SK-N-SH (cell line): ENCODE measurements at regions of chr5 and their contacts with region 1.

Region 1: DNA sequence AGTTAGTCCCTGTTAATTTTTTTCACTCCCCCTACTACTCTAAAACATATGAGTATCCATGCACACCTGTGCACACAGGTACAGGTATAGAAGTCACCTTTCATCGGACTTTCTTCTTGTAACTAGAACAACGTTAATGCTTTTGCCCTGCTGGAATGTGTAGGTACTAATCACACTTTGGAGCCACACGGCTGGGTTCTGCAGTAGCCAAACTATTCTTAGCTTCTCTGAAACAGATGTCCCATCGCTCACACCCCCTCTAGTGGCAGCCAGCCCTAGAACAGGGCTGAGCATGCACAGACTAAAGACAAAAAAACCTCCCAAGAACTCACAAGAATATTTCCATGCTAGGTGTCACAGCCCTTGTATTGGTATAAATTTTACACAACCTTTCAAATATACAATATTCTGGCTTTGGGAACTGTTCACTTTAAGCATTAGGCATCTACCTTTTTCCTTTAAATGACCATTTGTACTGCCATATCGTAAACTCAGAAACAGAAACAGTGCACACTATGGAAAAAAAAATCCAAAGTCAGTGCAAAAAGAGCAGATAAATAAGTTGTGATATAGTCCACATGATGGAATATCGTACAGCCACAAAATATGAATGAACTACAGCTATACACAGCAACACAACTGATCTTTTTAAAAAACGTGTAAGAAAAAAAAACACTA is 64.0 kb downstream of the RETREG1 start:
- DNase-seq: peak; percentile 65
- H3K4me3 ChIP-seq: no peak overlapping the region; a peak in 1 of 4 replicates
- H3K27ac ChIP-seq: no peak overlapping the region
- H3K4me1 ChIP-seq: no peaks in the 10 kb centered on the region
- H3K27me3 ChIP-seq: no peaks in the 10 kb centered on the region
- CTCF ChIP-seq: peak; percentile 90
- EP300 ChIP-seq: no peak
- RAD21 ChIP-seq: peak; percentile 65

Region 2: DNA sequence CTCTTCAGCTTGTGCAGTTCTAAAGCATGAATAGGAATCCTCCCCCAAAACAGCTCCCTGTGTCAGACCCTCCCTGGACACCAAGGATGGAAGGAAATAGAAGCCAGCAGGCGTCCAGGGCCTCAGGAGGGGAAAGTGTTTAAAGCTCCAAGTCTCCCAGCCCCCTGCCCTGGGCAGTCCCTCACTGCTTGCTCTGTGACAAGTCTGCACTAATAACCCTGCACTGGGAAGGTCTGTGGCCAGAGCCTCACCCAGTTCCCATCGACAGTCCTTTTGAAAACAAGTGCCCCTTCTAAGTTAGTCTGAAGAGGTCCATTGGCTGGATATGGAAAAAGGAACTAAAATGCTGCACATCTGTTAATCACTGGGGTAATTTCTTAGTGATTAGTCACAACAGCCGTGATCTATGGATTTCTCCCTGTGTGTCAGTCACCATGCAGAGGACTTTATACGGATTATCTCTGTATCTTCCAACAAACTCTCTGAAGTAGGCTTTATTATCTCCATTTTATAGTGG is 857.5 kb before region 1 on chr5:
- CTCF ChIA-PET with region 1: no interaction called
- POLR2A ChIA-PET with region 1: no interaction called
- DNase-seq: no peak
- H3K4me3 ChIP-seq: no peak overlapping the region
- H3K27ac ChIP-seq: peak overlapping the region; percentile 51 to 87; a peak in 3 of 4 replicates
- H3K4me1 ChIP-seq: peaks cover 17 to 29% of the 10 kb centered on the region in 2 experiments
- H3K27me3 ChIP-seq: no peaks in the 10 kb centered on the region
- CTCF ChIP-seq: no peak
- EP300 ChIP-seq: no peak
- RAD21 ChIP-seq: no peak

Region 3: DNA sequence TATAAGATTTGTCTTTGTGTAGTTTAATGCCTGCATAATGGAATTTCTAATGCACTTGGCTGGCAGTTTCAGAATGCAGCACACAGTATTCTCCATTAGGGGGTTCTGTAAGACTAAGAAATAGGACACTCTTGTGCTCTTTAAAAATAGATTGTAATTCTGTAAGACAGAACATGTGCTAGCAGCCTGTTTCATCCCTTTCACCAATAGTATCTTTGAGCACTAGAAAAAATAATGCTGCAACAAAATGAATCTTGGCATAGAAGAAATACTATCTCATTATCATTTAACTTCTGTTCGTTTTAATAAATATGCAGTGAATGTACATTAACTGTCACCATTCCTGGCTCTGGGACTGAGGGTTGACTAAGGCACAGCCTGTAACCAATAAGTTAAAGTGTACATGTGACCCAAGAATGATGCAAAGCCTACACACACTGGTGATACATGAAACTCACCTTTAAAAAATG is 63.4 kb before region 1 on chr5:
- CTCF ChIA-PET with region 1: interaction called, 22 read pairs
- POLR2A ChIA-PET with region 1: no interaction called
- DNase-seq: peak; percentile 54
- H3K4me3 ChIP-seq: no peak overlapping the region
- H3K27ac ChIP-seq: no peak overlapping the region
- H3K4me1 ChIP-seq: no peaks in the 10 kb centered on the region
- H3K27me3 ChIP-seq: no peaks in the 10 kb centered on the region
- CTCF ChIP-seq: peak; percentile 87
- EP300 ChIP-seq: no peak
- RAD21 ChIP-seq: peak; percentile 93

Region 4: GRCh38 chr5:16564248-16564867 is 11.6 kb after region 1 on chr5:
- CTCF ChIA-PET with region 1: interaction called, 21 read pairs
- POLR2A ChIA-PET with region 1: no interaction called
- DNase-seq: no peak
- H3K4me3 ChIP-seq: no peak overlapping the region
- H3K27ac ChIP-seq: no peak overlapping the region
- H3K4me1 ChIP-seq: peaks cover 0 to 11% of the 10 kb centered on the region in 2 experiments; a peak in 2 of 4 replicates
- H3K27me3 ChIP-seq: peaks cover 6% of the 10 kb centered on the region
- CTCF ChIP-seq: no peak
- EP300 ChIP-seq: no peak
- RAD21 ChIP-seq: no peak

Region 5: GRCh38 chr5:16740811-16741392 is 188.1 kb after region 1 on chr5:
- CTCF ChIA-PET with region 1: no interaction called
- POLR2A ChIA-PET with region 1: no interaction called
- DNase-seq: peak; percentile 50
- H3K4me3 ChIP-seq: no peak overlapping the region
- H3K27ac ChIP-seq: peak overlapping the region in 1 of 2 experiments; percentile 72; a peak in 2 of 4 replicates
- H3K4me1 ChIP-seq: peaks cover 17 to 19% of the 10 kb centered on the region in 2 experiments; a peak in 3 of 4 replicates
- H3K27me3 ChIP-seq: no peaks in the 10 kb centered on the region
- CTCF ChIP-seq: peak; percentile 22
- EP300 ChIP-seq: peak in 1 of 2 experiments; percentile 67; a peak in 1 of 4 replicates
- RAD21 ChIP-seq: peak; percentile 17; the same call in 1 of the 2 replicates

Region 6: GRCh38 chr5:16759147-16759773 is 206.5 kb after region 1 on chr5:
- CTCF ChIA-PET with region 1: no interaction called
- POLR2A ChIA-PET with region 1: no interaction called
- DNase-seq: no peak
- H3K4me3 ChIP-seq: no peak overlapping the region
- H3K27ac ChIP-seq: no peak overlapping the region
- H3K4me1 ChIP-seq: no peaks in the 10 kb centered on the region; a peak in 1 of 4 replicates
- H3K27me3 ChIP-seq: no peaks in the 10 kb centered on the region
- CTCF ChIP-seq: no peak
- EP300 ChIP-seq: no peak
- RAD21 ChIP-seq: no peak